ENCODE measurements at regions of chr18 and their contacts with region 1.

Region 1: DNA sequence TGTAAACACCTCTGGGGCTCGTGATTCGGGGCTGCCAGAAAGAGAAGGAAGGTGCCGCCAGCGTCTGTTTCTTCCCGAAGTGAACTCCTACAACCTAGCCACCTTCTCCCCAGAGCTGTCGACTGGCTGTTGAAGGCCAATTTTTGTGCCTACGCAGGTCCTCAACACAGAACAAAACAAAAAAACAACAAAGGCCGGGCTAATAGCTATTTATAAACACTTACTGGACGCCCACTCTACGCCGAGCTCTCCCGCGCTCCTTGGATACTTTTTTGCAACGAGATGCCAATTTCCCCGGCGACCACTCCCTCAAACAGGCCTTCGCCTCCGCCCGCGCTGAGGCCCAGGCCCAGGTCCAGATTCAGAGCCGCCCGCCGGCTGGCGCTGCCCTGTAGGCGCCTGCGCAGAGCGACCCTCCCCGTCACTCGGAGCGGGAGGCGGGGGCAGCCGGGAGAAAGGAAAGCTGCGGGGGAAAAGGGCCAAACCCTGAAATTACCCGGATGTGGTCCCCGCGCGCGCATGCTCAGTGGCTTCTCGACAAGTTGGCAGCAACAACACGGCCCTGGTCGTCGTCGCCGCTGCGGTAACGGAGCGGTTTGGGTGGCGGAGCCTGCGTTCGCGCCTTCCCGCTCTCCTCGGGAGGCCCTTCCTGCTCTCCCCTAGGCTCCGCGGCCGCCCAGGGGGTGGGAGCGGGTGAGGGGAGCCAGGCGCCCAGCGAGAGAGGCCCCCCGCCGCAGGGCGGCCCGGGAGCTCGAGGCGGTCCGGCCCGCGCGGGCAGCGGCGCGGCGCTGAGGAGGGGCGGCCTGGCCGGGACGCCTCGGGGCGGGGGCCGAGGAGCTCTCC is at the start of gene SMAD4:
- DNase-seq: peak; percentile 93
- H3K4me3 ChIP-seq: peak within 1 kb of the TSS; percentile 65 to 90 (median 72)
- H3K27ac ChIP-seq: peak within 1 kb of the TSS; percentile 83
- H3K4me1 ChIP-seq: peaks cover 6% of the 10 kb centered on the region
- H3K27me3 ChIP-seq: no peaks in the 10 kb centered on the region
- CTCF ChIP-seq: no peak
- total RNA-seq, gene SMAD4: 70.6 to 111 TPM

Region 2: GRCh38 chr18:50866765-50867164 is 163.2 kb before region 1 on chr18:
- CTCF ChIA-PET with region 1: no interaction called
- dilution Hi-C with region 1: no loop called
- in situ Hi-C with region 1: no loop called
- intact Hi-C with region 1: loop called (anchors 2 kb)
- DNase-seq: no peak
- H3K4me3 ChIP-seq: no peak overlapping the region
- H3K27ac ChIP-seq: no peak overlapping the region
- H3K4me1 ChIP-seq: peaks cover 32% of the 10 kb centered on the region
- H3K27me3 ChIP-seq: no peaks in the 10 kb centered on the region
- CTCF ChIP-seq: peak; percentile 13 to 29

Region 3: GRCh38 chr18:50902797-50903196 is 127.1 kb before region 1 on chr18:
- CTCF ChIA-PET with region 1: no interaction called
- dilution Hi-C with region 1: no loop called
- in situ Hi-C with region 1: no loop called
- intact Hi-C with region 1: no loop called
- DNase-seq: no peak
- H3K4me3 ChIP-seq: no peak overlapping the region
- H3K27ac ChIP-seq: no peak overlapping the region
- H3K4me1 ChIP-seq: no peaks in the 10 kb centered on the region
- H3K27me3 ChIP-seq: no peaks in the 10 kb centered on the region
- CTCF ChIP-seq: no peak

Region 4: DNA sequence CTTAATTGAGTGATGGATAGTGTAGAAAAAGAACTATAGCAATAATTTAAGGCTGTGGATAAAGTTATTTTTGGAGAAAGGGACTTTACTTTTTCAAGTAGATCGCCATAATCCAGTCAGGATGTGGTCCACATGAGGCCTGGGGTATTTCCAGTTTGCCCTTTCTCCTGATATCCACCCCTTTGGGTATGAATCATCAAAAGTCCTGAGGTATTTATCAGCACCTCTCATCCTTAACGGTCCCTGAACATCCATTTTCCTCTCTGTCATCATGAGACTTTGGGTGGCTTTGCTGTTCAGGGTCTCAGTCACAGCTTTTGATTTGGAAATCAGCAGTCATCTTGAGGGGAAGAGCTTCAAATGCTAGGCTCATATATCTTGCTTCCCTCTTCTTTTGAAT is 101.4 kb before region 1 on chr18:
- CTCF ChIA-PET with region 1: no interaction called
- dilution Hi-C with region 1: no loop called
- in situ Hi-C with region 1: no loop called
- intact Hi-C with region 1: no loop called
- DNase-seq: peak; percentile 12
- H3K4me3 ChIP-seq: no peak overlapping the region
- H3K27ac ChIP-seq: no peak overlapping the region
- H3K4me1 ChIP-seq: no peaks in the 10 kb centered on the region
- H3K27me3 ChIP-seq: no peaks in the 10 kb centered on the region
- CTCF ChIP-seq: no peak

Region 5: GRCh38 chr18:50967714-50968661 is 61.9 kb before region 1 on chr18 and contains the start of gene ELAC1:
- CTCF ChIA-PET with region 1: no interaction called
- dilution Hi-C with region 1: no loop called
- in situ Hi-C with region 1: no loop called
- intact Hi-C with region 1: loop called (anchors 2 kb)
- DNase-seq: peak; percentile 79
- H3K4me3 ChIP-seq: peak within 1 kb of the TSS; percentile 78 to 96 (median 91)
- H3K27ac ChIP-seq: peak within 1 kb of the TSS; percentile 91
- H3K4me1 ChIP-seq: peaks cover 16% of the 10 kb centered on the region
- H3K27me3 ChIP-seq: no peaks in the 10 kb centered on the region
- CTCF ChIP-seq: no peak
- total RNA-seq, gene ELAC1: 5.5 to 11.2 TPM

Region 6: GRCh38 chr18:51051105-51051712 is 21.3 kb after region 1 on chr18:
- CTCF ChIA-PET with region 1: no interaction called
- dilution Hi-C with region 1: no loop called
- in situ Hi-C with region 1: no loop called
- intact Hi-C with region 1: loop called (anchors 2 kb)
- DNase-seq: peak; percentile 27
- H3K4me3 ChIP-seq: no peak overlapping the region
- H3K27ac ChIP-seq: no peak overlapping the region
- H3K4me1 ChIP-seq: no peaks in the 10 kb centered on the region
- H3K27me3 ChIP-seq: no peaks in the 10 kb centered on the region
- CTCF ChIP-seq: peak; percentile 79 to 83